Vagina (tissue), 2 donors: ENCODE measurements at regions of chr7 and their contacts with region 1.

Region 1: GRCh38 chr7:106367018-106367420 is 82.2 kb upstream of the NAMPT start:
- DNase-seq: no peak
- H3K4me3 ChIP-seq: no peak overlapping the region
- H3K27ac ChIP-seq: no peak overlapping the region
- H3K4me1 ChIP-seq: no peaks in the 10 kb centered on the region
- H3K27me3 ChIP-seq: no peaks in the 10 kb centered on the region
- CTCF ChIP-seq: no peak
- POLR2A ChIP-seq: no peak

Region 2: GRCh38 chr7:106196460-106197021 is 170.5 kb before region 1 on chr7:
- intact Hi-C with region 1: no loop called
- DNase-seq: no peak
- H3K4me3 ChIP-seq: no peak overlapping the region
- H3K27ac ChIP-seq: no peak overlapping the region
- H3K4me1 ChIP-seq: peaks cover 5% of the 10 kb centered on the region
- H3K27me3 ChIP-seq: no peaks in the 10 kb centered on the region
- CTCF ChIP-seq: no peak
- POLR2A ChIP-seq: no peak

Region 3: GRCh38 chr7:106812027-106812643 is 445.1 kb after region 1 on chr7:
- intact Hi-C with region 1: loop called (anchors 5 kb)
- DNase-seq: peak; percentile 76 to 87
- H3K4me3 ChIP-seq: no peak overlapping the region
- H3K27ac ChIP-seq: no peak overlapping the region
- H3K4me1 ChIP-seq: no peaks in the 10 kb centered on the region
- H3K27me3 ChIP-seq: no peaks in the 10 kb centered on the region
- CTCF ChIP-seq: no peak
- POLR2A ChIP-seq: no peak